AG04450 (cell line): ENCODE measurements at regions of chr19 and their contacts with region 1.

Region 1: GRCh38 chr19:38402967-38403861 is at the start of gene FAM98C:
- DNase-seq: peak; percentile 85
- H3K4me3 ChIP-seq: peak within 1 kb of the TSS; percentile 94
- H3K27ac ChIP-seq: no peak within 1 kb of the TSS
- H3K27me3 ChIP-seq: no peaks in the 10 kb centered on the region
- CTCF ChIP-seq: peak; percentile 75
- polyA plus RNA-seq, gene FAM98C: 5.0 and 7.9 TPM in 2 replicates

Region 2: GRCh38 chr19:38233740-38234251 is 169.4 kb before region 1 on chr19:
- CTCF ChIA-PET with region 1: interaction called, 12 read pairs
- POLR2A ChIA-PET with region 1: no interaction called
- DNase-seq: peak; percentile 27
- H3K4me3 ChIP-seq: no peak overlapping the region
- H3K27ac ChIP-seq: no peak overlapping the region
- H3K27me3 ChIP-seq: peaks cover 5% of the 10 kb centered on the region
- CTCF ChIP-seq: peak; percentile 89

Region 3: DNA sequence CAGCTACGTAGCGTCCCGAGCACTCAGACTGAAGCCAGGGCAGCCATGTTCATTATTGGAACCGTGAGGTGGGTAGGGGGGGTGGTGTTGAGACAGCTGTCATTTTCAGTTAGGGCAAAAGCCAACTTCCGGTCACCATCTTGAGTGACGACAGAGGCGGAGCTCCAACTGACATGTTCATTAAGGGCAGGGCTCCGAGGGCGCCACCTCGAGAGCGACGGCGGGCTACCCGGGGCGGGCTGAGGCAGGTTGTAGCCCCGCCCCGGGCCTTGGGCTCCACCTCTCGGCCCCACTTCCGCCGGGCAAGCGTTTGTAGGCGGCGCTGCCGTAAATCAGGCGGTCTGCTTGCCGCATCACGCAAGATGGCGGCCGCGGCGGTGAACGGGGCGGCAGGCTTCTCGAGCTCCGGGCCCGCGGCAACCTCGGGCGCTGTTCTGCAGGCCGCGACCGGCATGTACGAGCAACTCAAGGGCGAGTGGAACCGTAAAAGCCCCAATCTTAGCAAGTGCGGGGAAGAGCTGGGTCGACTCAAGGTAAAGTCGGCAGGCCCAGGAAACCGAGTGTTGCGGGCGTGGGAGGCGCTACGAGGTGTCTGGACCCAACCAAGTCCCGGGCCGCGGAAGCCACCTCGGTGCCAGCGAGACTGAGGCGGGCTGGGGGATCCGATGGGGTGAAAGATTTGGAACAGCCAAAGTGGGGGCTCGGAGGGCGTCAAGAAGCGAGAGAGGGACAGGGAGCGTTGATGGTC is 28.6 kb before region 1 on chr19 and contains the start of gene PSMD8:
- CTCF ChIA-PET with region 1: interaction called, 21 read pairs
- POLR2A ChIA-PET with region 1: interaction called, 8 read pairs
- DNase-seq: peak; percentile 95
- H3K4me3 ChIP-seq: peak within 1 kb of the TSS; percentile 92
- H3K27ac ChIP-seq: peak within 1 kb of the TSS; percentile 87
- H3K27me3 ChIP-seq: peaks cover 5% of the 10 kb centered on the region
- CTCF ChIP-seq: no peak; the same call in 1 of the 2 replicates
- polyA plus RNA-seq, gene PSMD8: 287 and 328 TPM in 2 replicates

Region 4: DNA sequence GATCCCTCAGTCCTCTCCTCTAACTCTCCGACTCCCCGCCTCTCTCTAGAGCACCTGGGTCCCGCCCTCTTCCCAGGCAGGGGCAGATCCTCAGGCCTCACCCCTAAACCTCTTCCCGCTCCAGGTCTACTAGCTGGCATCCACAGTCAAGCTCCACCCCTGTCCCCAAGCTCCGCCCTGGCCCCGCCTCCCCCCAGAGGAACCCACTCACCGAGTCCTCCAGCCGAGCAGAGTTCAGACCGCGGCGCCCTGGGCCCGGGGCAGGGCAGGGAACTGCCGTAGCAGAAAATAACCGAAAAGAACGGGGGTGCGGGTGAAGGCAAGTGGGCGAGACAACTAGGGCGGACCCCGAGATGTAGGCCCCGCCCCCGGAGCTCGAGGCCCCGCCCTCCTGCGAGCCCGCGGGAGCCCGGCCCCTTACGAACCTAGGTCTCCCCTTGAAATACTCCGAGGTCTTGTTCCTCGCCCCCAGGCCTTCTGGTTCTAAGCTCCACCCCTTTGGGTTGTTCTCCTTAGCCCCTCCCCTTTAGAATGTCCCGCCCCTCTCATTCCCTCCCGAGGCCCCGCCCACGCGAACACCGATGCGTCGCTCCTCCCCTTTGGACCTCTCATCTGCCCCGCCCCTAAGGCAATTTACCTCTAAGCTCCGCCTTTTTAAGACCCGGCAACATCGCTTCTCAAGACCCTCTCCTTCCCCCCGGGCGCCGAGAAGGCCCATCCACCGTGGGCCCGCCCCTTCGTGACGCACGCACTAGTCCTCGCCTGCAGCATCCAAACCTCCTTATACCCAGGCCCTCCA is 15.5 kb before region 1 on chr19 and contains the start of gene GGN:
- CTCF ChIA-PET with region 1: interaction called, 41 read pairs
- POLR2A ChIA-PET with region 1: interaction called, 29 read pairs
- DNase-seq: peak; percentile 87
- H3K4me3 ChIP-seq: peak within 1 kb of the TSS; percentile 93
- H3K27ac ChIP-seq: peak within 1 kb of the TSS; percentile 77
- H3K27me3 ChIP-seq: no peaks in the 10 kb centered on the region
- CTCF ChIP-seq: no peak
- polyA plus RNA-seq, gene GGN: 0.15 and 0.27 TPM in 2 replicates

Region 5: DNA sequence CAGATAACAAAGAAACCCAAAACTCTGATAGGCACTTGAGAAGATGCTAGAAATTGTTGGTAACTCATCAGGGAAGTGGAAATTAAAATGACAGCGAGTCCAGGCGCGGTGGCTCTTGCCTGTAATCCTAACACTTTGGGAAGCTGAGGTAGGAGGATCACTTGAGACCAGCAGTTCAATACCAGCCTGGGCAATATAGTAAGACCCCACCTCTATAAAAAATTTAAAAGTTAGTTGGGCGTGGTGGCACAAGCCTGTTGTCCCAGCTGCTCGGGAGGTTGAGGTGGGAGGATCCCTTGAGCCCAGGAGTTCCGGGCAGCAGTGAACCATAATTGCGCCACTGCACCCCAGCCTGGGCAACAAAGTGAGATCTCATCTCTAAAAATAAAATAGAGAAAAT is 27.7 kb after region 1 on chr19:
- CTCF ChIA-PET with region 1: no interaction called
- POLR2A ChIA-PET with region 1: no interaction called
- DNase-seq: no peak
- H3K4me3 ChIP-seq: no peak overlapping the region
- H3K27ac ChIP-seq: no peak overlapping the region
- H3K27me3 ChIP-seq: peaks cover 8% of the 10 kb centered on the region
- CTCF ChIP-seq: no peak

Region 6: DNA sequence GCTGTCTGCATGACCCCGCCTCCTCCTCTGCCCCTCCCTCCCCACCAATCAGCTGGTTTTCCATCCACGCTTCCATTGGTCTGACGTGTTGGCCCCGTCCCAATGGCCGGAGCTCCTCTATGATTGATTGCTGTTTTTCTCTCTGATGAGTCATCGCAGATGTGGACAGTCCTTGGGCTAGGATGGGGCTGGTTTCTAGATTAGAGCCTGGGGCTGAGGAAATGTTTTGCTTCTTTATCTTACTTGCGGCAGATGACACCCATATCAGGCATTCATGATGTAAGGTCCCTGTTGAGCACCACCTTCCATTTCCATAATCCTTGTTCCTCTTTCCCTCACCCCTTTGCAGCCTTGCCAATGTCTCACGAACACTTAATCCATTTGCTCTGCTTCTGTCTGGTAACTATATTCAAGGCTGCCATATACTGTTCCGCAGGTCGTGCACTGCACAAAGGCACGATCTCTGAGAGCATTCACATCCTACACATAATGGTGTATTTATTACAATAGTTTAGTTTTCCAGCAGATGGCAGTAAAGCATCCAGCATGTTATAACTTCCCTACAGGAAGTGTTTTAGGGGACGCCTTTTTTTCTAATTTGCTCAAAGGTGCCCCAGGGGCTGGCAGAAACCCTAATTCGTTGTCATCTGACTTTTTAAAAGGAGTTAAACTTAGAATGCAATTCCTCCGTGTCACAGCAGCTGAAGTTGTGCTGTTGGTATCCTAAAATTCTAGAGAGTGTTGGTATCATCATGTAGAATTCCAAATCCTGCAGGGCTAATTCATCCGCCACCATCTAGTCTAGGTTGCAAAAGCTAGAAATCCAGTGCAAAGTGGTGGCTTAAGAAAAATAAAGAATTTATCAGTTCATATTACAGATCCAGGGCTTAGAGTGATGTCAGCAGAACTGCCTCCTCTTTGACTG is 141.1 kb after region 1 on chr19:
- CTCF ChIA-PET with region 1: no interaction called
- POLR2A ChIA-PET with region 1: no interaction called
- DNase-seq: peak; percentile 24
- H3K4me3 ChIP-seq: no peak overlapping the region
- H3K27ac ChIP-seq: no peak overlapping the region
- H3K27me3 ChIP-seq: peaks cover 3% of the 10 kb centered on the region
- CTCF ChIP-seq: peak; percentile 62

Region 7: GRCh38 chr19:38618590-38619360 is 215.6 kb after region 1 on chr19 and contains the start of gene EIF3K:
- CTCF ChIA-PET with region 1: interaction called, 25 read pairs
- POLR2A ChIA-PET with region 1: interaction called, 3 read pairs
- DNase-seq: peak; percentile 98
- H3K4me3 ChIP-seq: peak within 1 kb of the TSS; percentile 97
- H3K27ac ChIP-seq: peak within 1 kb of the TSS; percentile 43
- H3K27me3 ChIP-seq: no peaks in the 10 kb centered on the region
- CTCF ChIP-seq: no peak
- polyA plus RNA-seq, gene EIF3K: 168 and 250 TPM in 2 replicates

Region 8: GRCh38 chr19:38929929-38930775 is 526.9 kb after region 1 on chr19 and contains the start of gene SARS2:
- CTCF ChIA-PET with region 1: interaction called, 11 read pairs
- POLR2A ChIA-PET with region 1: no interaction called
- DNase-seq: peak; percentile 90
- H3K4me3 ChIP-seq: peak within 1 kb of the TSS; percentile 99
- H3K27ac ChIP-seq: peak within 1 kb of the TSS; percentile 86
- H3K27me3 ChIP-seq: no peaks in the 10 kb centered on the region
- CTCF ChIP-seq: peak; percentile 98
- polyA plus RNA-seq, gene SARS2: 10.1 and 16.2 TPM in 2 replicates